Activated CD8-positive, alpha-beta T cell treated with anti-CD3 and anti-CD28 coated beads, Interleukin-2, amount 10 ng/mL, durations not matched to agents 7 days and 5 days (primary cell): ENCODE measurements at regions of chr19 and their contacts with region 1.

Region 1: GRCh38 chr19:39846176-39846677 is at the start of gene FBL:
- DNase-seq: peak; percentile 98
- ATAC-seq: peak; percentile 93
- H3K4me3 Mint-ChIP-seq: peak within 1 kb of the TSS; percentile 91
- H3K27ac Mint-ChIP-seq: peak within 1 kb of the TSS; percentile 90
- H3K4me1 Mint-ChIP-seq: peaks cover 46% of the 10 kb centered on the region
- H3K27me3 Mint-ChIP-seq: no peaks in the 10 kb centered on the region
- total RNA-seq, gene FBL: 385 to 399 TPM

Region 2: GRCh38 chr19:39671738-39672363 is 174.4 kb before region 1 on chr19:
- CTCF ChIA-PET with region 1: interaction called, 73 read pairs
- POLR2A ChIA-PET with region 1: no interaction called
- DNase-seq: peak; percentile 70
- ATAC-seq: peak; percentile 86
- H3K4me3 Mint-ChIP-seq: no peak overlapping the region
- H3K27ac Mint-ChIP-seq: no peak overlapping the region
- H3K4me1 Mint-ChIP-seq: peaks cover 22% of the 10 kb centered on the region
- H3K27me3 Mint-ChIP-seq: peaks cover 22% of the 10 kb centered on the region

Region 3: DNA sequence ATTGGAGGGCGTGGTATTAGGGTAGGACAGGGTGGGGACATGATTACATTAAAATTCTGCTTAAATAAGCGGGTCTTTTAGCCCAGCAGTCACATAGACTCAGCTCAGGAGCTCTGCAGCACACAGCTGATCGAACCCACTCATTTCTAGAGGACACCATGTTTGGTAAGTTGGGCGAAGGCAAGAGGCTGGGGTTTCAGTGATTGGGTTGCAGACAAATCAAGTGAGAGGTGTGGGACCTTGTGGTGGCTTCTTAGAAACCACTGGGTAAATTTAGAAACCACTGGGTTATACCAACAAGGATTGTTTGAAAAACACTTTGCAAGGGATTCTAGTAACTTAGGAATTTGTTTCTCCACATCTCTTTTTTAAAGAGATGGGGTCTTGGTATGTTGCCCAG is 67.5 kb before region 1 on chr19 and contains the start of gene LEUTX:
- CTCF ChIA-PET with region 1: interaction called, 14 read pairs
- POLR2A ChIA-PET with region 1: interaction called, 3 read pairs
- DNase-seq: peak; percentile 33
- ATAC-seq: no peak
- H3K4me3 Mint-ChIP-seq: no peak within 1 kb of the TSS
- H3K27ac Mint-ChIP-seq: no peak within 1 kb of the TSS
- H3K4me1 Mint-ChIP-seq: peaks cover 15% of the 10 kb centered on the region
- H3K27me3 Mint-ChIP-seq: peaks cover 34% of the 10 kb centered on the region
- total RNA-seq, gene LEUTX: not detected

Region 4: DNA sequence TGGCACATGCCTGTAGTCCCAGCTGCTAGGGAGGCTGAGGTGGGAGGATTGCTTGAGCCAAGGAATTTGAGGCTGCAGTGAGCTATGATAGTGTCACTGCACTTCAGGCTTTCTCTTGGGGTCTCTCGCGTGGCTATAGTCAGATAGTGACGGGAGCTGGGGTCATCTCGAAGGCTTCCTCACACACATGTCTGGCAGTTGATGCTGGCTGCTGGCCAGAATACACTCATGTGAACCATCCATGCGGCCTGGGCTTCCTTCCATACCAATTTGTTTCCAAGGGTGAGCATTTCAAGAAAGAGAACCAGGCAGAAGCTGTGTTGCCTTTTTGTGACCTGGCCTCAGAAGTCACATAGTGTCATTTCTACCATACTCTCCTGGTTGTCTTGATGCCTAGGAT is 41.1 kb before region 1 on chr19:
- CTCF ChIA-PET with region 1: interaction called, 46 read pairs
- POLR2A ChIA-PET with region 1: no interaction called
- DNase-seq: no peak
- ATAC-seq: no peak
- H3K4me3 Mint-ChIP-seq: no peak overlapping the region
- H3K27ac Mint-ChIP-seq: no peak overlapping the region
- H3K4me1 Mint-ChIP-seq: no peaks in the 10 kb centered on the region
- H3K27me3 Mint-ChIP-seq: peaks cover 13% of the 10 kb centered on the region

Region 5: GRCh38 chr19:39824143-39825092 is 21.8 kb before region 1 on chr19:
- CTCF ChIA-PET with region 1: interaction called, 34 read pairs
- POLR2A ChIA-PET with region 1: interaction called, 4 read pairs
- DNase-seq: peak; percentile 94
- ATAC-seq: peak; percentile 99
- H3K4me3 Mint-ChIP-seq: no peak overlapping the region
- H3K27ac Mint-ChIP-seq: no peak overlapping the region
- H3K4me1 Mint-ChIP-seq: peaks cover 14% of the 10 kb centered on the region
- H3K27me3 Mint-ChIP-seq: no peaks in the 10 kb centered on the region

Region 6: DNA sequence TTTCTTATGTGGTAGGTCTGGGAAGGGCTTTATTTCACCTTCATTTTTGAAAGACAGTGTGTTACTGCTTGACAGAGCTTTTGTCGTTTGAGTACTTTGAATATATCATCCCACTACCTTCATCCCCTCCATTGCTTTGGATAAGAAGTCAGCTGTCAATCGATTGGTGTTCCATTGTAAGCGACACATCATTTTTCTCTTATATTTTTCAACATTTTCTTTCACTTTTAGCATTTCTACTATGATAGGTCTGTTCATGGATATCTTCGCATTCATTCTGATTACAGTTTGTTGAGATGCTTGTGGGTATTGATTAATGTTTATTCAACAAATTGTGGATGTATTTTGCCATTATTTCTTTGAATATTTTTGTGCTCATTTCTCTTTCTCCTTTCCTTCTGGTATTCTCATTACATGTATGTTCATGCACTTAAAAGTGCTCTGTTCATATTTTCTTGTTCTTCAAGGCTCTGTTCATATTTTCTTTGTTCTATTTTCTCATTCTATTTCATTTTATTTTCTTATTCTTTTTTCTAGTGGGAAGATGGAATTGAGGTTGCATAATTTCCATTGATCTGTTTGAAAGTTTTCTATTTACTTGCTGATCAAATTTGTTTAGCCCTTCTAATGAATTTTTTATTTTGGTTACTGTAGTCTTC is 179.8 kb after region 1 on chr19:
- CTCF ChIA-PET with region 1: no interaction called
- POLR2A ChIA-PET with region 1: no interaction called
- DNase-seq: no peak
- ATAC-seq: no peak
- H3K4me3 Mint-ChIP-seq: no peak overlapping the region
- H3K27ac Mint-ChIP-seq: no peak overlapping the region
- H3K4me1 Mint-ChIP-seq: no peaks in the 10 kb centered on the region
- H3K27me3 Mint-ChIP-seq: no peaks in the 10 kb centered on the region